A549 (cell line): ENCODE measurements at regions of chr17 and their contacts with region 1.

Region 1: DNA sequence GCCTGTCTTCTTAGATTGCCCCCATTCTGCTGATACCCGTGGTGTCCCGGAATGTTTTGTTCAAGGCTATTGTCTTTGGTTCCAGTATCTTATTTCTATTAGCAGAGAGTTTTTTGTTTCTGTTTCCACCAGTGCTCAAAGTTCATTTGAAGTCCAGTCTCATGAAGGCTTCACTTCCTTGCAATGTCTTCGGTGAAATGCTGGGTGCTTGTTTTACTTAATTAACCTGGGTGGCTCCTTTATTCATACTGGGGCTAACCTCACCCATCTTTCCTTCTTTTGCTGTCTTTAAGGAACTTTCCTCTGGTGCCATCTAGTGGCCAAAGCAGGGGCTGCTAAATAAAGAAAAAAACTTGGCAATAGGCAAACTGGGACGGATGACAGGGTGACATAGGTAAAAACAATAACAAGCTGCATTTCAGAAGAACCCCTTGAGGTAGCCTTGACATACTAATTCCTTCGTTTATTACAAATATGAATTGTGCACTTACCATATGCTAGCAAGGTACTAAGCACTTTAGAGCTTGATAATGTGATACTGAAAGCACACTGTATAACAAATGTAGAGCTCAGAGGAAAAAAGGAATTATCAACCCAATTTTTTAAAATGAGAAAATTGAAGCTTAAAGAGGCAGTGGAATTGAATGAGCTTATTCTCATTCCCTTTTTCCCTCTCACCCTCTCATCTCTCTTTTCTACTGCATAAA is 2.8 kb upstream of the SMIM36 start:
- DNase-seq: peak; percentile 61 to 79
- ATAC-seq: peak; percentile 55 to 88
- H3K4me3 ChIP-seq: no peak overlapping the region
- H3K27ac ChIP-seq: peak overlapping the region; percentile 69 to 74
- H3K4me1 ChIP-seq: peaks cover 9% of the 10 kb centered on the region
- CTCF ChIP-seq: peak; percentile 98
- EP300 ChIP-seq: no peak
- POLR2A ChIP-seq: no peak
- RAD21 ChIP-seq: peak; percentile 98 to 99

Region 2: DNA sequence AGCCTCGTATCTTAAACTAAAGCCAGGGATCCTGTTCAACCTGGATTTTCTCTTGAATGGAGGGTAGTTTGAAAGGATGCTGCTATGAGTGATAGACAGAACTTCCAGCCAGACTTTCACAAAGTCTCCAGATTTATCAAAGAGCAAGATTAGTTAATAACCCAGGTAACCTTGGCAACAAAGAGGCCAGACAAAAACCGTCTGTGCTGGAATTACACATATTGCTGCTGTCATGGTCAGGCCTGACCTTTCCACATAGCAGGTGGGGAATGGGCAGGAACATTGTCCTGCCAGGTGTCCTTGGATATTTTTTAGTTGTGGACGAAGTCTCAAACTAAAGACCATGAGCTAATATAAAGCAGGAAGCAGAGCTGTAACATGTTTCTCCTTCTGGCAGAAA is 196.8 kb before region 1 on chr17:
- CTCF ChIA-PET with region 1: no interaction called
- POLR2A ChIA-PET with region 1: no interaction called
- DNase-seq: no peak
- ATAC-seq: no peak
- H3K4me3 ChIP-seq: no peak overlapping the region
- H3K27ac ChIP-seq: no peak overlapping the region
- H3K4me1 ChIP-seq: no peaks in the 10 kb centered on the region
- CTCF ChIP-seq: no peak
- EP300 ChIP-seq: no peak
- POLR2A ChIP-seq: no peak
- RAD21 ChIP-seq: no peak

Region 3: DNA sequence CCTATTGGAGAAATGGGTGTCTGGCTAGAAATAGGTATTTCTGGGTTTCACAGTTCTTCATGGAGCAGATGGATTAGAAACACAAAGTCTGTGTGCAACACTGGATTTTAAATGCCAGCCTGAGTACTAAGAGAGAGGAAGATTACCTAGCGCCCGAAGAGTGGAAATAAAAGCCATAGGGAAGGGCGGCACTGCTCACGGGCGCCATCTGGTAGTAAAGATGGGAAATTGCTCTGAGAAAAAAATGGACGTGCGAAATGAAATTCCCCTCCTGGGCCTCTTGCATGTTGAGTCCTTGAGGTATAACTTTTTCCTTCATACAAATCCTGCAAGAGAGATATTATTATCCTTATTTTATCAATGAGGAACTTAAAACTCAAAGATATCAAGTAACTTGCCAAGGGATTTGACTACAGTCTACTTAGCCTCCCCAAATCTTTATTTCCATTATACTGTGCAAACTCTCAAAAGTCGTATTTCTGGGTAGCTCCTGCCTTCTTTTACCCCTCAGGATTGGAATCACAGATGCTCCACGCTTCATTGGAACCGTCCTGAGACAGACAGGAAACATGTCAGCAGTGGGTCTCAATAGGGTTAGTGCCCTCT is 165.2 kb before region 1 on chr17:
- CTCF ChIA-PET with region 1: interaction called, 125 read pairs
- POLR2A ChIA-PET with region 1: no interaction called
- DNase-seq: peak; percentile 40 to 66
- ATAC-seq: peak; percentile 74 to 89; a peak in 5 of 6 replicates
- H3K4me3 ChIP-seq: no peak overlapping the region
- H3K27ac ChIP-seq: peak overlapping the region; percentile 23 to 56; a peak in 5 of 6 replicates
- H3K4me1 ChIP-seq: peaks cover 4% of the 10 kb centered on the region; the same call in 1 of the 3 replicates
- CTCF ChIP-seq: peak; percentile 94
- EP300 ChIP-seq: no peak
- POLR2A ChIP-seq: no peak
- RAD21 ChIP-seq: peak; percentile 83 to 86

Region 4: DNA sequence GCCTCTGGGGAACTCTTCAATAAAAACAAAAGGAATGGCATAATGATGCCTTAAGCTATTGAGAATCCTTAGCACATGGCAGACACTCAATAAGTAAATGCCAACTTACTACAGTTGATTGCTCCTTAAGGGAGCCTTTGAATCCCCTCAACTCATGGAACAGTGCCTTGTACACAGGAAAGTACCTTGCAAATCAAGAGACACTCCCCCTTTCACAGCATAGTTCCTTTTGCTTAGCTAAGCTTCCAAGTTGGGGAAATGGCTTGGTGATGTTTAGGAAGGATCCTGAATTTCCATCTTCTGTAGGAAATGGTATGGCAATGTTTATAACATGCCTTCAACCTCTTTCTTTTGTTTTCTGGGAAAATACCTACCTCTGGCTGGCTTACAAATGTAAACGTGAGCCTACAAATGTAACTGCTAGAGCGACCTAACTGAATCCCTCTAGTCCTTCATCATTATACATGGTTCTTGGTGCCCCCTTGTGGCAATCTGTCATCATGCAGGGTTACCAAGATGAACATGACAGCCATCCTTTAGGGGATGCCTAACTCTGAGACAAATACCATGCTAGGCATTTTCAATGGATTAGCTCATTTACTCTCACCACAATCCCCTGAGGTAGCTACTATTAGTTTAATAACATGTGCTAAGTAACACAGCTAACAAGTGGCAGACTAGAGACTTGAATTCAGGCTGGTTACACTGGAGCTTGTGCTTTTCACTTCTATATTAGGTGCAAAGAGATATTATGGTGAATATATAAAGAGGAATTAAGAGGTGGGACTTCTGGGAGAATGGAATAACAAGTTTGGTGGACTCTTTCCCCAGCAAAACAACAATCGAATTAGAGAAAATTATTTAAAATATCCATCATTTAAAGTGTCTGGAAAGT is 157.4 kb before region 1 on chr17:
- CTCF ChIA-PET with region 1: interaction called, 125 read pairs
- POLR2A ChIA-PET with region 1: no interaction called
- DNase-seq: peak; percentile 86 to 88
- ATAC-seq: peak; percentile 100
- H3K4me3 ChIP-seq: no peak overlapping the region
- H3K27ac ChIP-seq: peak overlapping the region; percentile 29 to 33; a peak in 3 of 6 replicates
- H3K4me1 ChIP-seq: no peaks in the 10 kb centered on the region
- CTCF ChIP-seq: peak; percentile 82
- EP300 ChIP-seq: no peak
- POLR2A ChIP-seq: no peak
- RAD21 ChIP-seq: peak; percentile 78 to 81

Region 5: DNA sequence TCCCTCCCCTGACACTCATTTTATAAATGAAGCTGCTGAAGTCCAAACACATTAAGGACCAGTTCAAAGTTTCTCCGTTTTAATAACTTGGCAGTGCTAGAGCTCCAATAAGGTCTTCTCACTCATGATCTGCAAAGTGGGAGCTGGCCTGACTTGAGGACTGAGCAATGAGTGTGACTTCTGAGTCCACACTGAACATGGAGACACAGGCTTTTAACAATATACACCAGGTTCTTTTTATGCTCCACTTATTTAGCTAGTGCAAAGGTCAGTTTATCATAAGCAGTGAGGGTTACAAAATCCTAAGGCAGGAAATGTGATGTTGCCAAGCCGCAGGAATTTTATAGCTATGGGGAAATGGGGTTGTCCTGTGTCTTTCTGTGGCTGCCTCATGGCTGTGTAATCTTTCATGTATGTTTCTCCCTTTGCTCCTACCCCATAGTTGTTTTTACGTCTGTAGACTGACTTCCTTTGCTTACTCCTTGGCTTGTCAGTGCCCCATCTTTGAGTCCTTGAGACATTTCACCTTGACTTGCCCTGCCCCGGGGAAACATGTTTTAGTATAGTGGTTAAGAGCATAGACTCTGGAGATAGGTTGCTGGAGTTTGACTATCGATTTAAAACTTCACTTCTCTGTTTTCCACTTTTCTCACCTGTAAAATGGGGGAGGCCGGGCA is 80.3 kb before region 1 on chr17:
- CTCF ChIA-PET with region 1: interaction called, 10 read pairs
- POLR2A ChIA-PET with region 1: interaction called, 3 read pairs
- DNase-seq: peak; percentile 80 to 91
- ATAC-seq: peak; percentile 76 to 85
- H3K4me3 ChIP-seq: peak overlapping the region; percentile 6; the same call in 1 of the 3 replicates
- H3K27ac ChIP-seq: peak overlapping the region; percentile 84 to 86
- H3K4me1 ChIP-seq: peaks cover 55% of the 10 kb centered on the region
- CTCF ChIP-seq: no peak
- EP300 ChIP-seq: peak; percentile 79 to 91; a peak in 4 of 5 replicates
- POLR2A ChIP-seq: no peak
- RAD21 ChIP-seq: peak in 1 of 2 experiments; percentile 38; a peak in 2 of 5 replicates

Region 6: GRCh38 chr17:55446581-55447205 is 67.3 kb before region 1 on chr17:
- CTCF ChIA-PET with region 1: interaction called, 10 read pairs
- POLR2A ChIA-PET with region 1: no interaction called
- DNase-seq: peak in 1 of 2 experiments; percentile 88
- ATAC-seq: peak; percentile 63 to 75; a peak in 5 of 6 replicates
- H3K4me3 ChIP-seq: no peak overlapping the region
- H3K27ac ChIP-seq: peak overlapping the region; percentile 65 to 79
- H3K4me1 ChIP-seq: peaks cover 76% of the 10 kb centered on the region
- CTCF ChIP-seq: no peak
- EP300 ChIP-seq: peak; percentile 62 to 69; a peak in 3 of 5 replicates
- POLR2A ChIP-seq: no peak
- RAD21 ChIP-seq: no peak

Region 7: DNA sequence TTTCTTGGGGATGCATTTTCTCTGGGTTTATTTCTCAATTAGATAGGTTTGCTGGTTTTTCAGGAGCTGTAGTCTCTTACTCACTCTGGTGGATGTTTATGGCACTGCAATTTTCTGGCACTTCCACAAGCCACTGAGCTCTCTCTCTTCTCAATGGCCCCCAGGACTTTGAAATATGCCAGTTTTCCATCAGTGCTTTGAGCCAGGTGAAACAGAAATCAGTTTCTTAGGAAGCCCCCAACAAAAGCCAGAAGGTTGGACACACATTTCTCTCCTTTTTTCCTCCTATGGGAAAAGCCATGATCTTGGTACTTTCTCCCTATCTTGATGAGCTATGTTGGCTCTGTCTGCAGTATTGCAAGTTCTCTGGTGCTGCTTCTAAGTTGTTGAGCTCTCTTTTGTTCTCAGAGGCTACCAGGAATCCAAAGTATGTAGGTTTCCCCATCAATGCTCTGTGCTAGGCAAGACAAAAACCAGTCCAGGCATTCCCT is 87.9 kb after region 1 on chr17:
- CTCF ChIA-PET with region 1: interaction called, 13 read pairs
- POLR2A ChIA-PET with region 1: no interaction called
- DNase-seq: peak; percentile 40 to 60
- ATAC-seq: peak; percentile 73 to 89; a peak in 5 of 6 replicates
- H3K4me3 ChIP-seq: no peak overlapping the region
- H3K27ac ChIP-seq: no peak overlapping the region
- H3K4me1 ChIP-seq: peaks cover 2% of the 10 kb centered on the region; the same call in 2 of the 3 replicates
- CTCF ChIP-seq: peak; percentile 83
- EP300 ChIP-seq: no peak
- POLR2A ChIP-seq: no peak
- RAD21 ChIP-seq: peak; percentile 91 to 93

Region 8: DNA sequence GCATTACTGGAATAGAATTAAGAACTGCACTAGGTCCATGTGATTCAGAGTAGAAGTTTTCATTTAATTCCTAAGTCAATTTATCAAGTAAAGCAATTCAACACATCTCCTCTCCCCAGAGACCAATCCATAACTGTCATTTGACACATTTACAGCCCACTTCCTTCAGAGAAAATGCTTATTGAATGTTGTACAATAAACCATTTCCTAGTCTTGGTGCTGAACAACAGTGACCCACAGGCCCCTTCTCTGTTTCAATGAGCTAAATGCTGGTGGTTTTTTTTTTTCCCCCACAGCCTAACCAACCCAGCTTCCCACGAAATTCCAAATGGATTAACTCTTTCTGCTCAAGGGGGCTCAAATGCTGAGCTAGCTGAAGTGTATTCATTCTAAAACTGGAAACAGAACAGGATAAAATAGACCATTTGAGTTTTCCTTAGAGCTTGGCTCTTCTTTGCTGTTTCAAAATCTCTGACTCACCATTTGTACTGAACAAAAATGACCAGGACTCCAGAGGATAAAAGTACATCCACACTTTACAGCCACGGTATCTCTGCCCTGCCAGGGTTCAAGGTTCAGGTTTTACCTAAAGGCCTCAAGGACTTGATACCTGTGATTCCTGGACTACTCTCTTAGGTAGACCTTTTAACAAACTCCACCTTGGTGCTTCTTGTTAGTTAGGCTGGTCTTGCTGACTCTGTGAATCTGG is 146.3 kb after region 1 on chr17:
- CTCF ChIA-PET with region 1: no interaction called
- POLR2A ChIA-PET with region 1: no interaction called
- DNase-seq: no peak
- ATAC-seq: no peak
- H3K4me3 ChIP-seq: no peak overlapping the region
- H3K27ac ChIP-seq: no peak overlapping the region
- H3K4me1 ChIP-seq: no peaks in the 10 kb centered on the region
- CTCF ChIP-seq: no peak
- EP300 ChIP-seq: no peak
- POLR2A ChIP-seq: no peak
- RAD21 ChIP-seq: no peak

Region 9: GRCh38 chr17:55705849-55706248 is 191.8 kb after region 1 on chr17:
- CTCF ChIA-PET with region 1: no interaction called
- POLR2A ChIA-PET with region 1: no interaction called
- DNase-seq: peak; percentile 16 to 48
- ATAC-seq: peak; percentile 76 to 79; a peak in 5 of 6 replicates
- H3K4me3 ChIP-seq: no peak overlapping the region
- H3K27ac ChIP-seq: no peak overlapping the region
- H3K4me1 ChIP-seq: peaks cover 15% of the 10 kb centered on the region
- CTCF ChIP-seq: no peak
- EP300 ChIP-seq: no peak
- POLR2A ChIP-seq: no peak
- RAD21 ChIP-seq: no peak